Activated naive CD4-positive, alpha-beta T cell treated with anti-CD3 and anti-CD28 coated beads, Interleukin-2, amount 10 ng/mL, durations not matched to agents 7 days and 5 days (primary cell): ENCODE measurements at regions of chrX and their contacts with region 1.

Region 1: GRCh38 chrX:53678667-53679066 is 7.9 kb downstream of the HUWE1 start:
- DNase-seq: no peak
- H3K4me3 Mint-ChIP-seq: no peak overlapping the region
- H3K27ac Mint-ChIP-seq: peak overlapping the region; percentile 14
- H3K4me1 Mint-ChIP-seq: peaks cover 36% of the 10 kb centered on the region
- H3K27me3 Mint-ChIP-seq: no peaks in the 10 kb centered on the region

Region 2: DNA sequence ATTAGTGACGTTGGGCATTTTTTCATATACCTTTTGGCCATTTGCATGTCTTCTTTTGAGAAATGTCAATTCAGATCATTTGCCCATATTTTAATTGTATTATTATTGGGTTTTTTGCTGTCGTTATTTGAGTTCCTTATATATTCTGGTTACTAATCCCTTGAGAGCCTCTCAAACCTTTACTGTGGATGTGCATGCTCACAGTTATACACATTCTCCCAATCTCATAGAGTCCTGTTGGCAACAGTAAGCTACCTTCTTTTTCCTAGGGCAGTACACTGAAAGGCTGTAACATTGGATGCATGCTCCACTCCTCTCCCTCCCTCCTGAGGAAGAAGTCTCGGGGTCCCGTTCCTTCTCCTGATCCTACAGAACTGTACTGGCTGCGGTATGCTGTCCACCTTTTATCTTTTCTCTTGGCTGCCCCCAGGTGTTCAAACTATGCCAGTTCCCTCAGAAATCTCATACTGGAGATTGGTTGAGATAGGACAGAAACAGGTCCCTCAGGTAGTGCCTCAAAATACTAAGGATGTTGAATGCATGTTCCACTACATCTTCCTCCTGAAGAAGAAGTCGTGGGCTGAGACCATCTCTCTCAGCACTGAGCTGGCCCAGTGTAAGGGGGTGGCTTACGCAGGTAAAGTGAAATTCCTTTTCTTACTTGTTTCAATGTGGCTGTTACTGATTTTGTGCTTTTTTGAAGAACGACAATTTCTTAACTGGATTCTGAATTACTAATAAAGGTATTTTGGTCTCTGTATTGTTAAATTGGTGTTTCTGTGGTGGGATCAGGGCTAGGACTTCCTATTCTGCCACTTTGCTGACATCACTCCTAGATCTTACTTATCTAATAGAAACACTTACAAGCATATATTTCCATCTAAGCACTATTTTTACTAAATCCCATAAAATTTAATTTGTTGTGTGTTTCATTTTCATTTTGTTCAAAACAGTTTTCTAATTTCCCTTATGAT is 153.3 kb after region 1 on chrX:
- CTCF ChIA-PET with region 1: interaction called, 14 read pairs
- DNase-seq: peak; percentile 58
- H3K4me3 Mint-ChIP-seq: no peak overlapping the region
- H3K27ac Mint-ChIP-seq: no peak overlapping the region
- H3K4me1 Mint-ChIP-seq: peaks cover 6% of the 10 kb centered on the region
- H3K27me3 Mint-ChIP-seq: no peaks in the 10 kb centered on the region